Caco-2 (cell line): ENCODE measurements at regions of chr7 and their contacts with region 1.

Region 1: GRCh38 chr7:35519971-35520809 is 174.7 kb downstream of the HERPUD2 start:
- DNase-seq: peak; percentile 66 to 77
- H3K4me3 ChIP-seq: no peak overlapping the region
- H3K4me3 Mint-ChIP-seq: no peak overlapping the region
- H3K27ac Mint-ChIP-seq: no peak overlapping the region
- H3K4me1 ChIP-seq: no peaks in the 10 kb centered on the region
- H3K4me1 Mint-ChIP-seq: no peaks in the 10 kb centered on the region
- H3K27me3 ChIP-seq: no peaks in the 10 kb centered on the region
- H3K27me3 Mint-ChIP-seq: peaks cover 22% of the 10 kb centered on the region
- CTCF ChIP-seq: peak; percentile 88 to 91

Region 2: GRCh38 chr7:35185907-35186731 is 334.1 kb before region 1 on chr7:
- CTCF ChIA-PET with region 1: interaction called, 4 read pairs
- POLR2A ChIA-PET with region 1: no interaction called
- intact Hi-C with region 1: loop called (anchors 1 kb)
- DNase-seq: no peak
- H3K4me3 ChIP-seq: no peak overlapping the region
- H3K4me3 Mint-ChIP-seq: no peak overlapping the region
- H3K27ac Mint-ChIP-seq: no peak overlapping the region
- H3K4me1 ChIP-seq: no peaks in the 10 kb centered on the region
- H3K4me1 Mint-ChIP-seq: no peaks in the 10 kb centered on the region
- H3K27me3 ChIP-seq: no peaks in the 10 kb centered on the region
- H3K27me3 Mint-ChIP-seq: peaks cover 10% of the 10 kb centered on the region
- CTCF ChIP-seq: no peak

Region 3: DNA sequence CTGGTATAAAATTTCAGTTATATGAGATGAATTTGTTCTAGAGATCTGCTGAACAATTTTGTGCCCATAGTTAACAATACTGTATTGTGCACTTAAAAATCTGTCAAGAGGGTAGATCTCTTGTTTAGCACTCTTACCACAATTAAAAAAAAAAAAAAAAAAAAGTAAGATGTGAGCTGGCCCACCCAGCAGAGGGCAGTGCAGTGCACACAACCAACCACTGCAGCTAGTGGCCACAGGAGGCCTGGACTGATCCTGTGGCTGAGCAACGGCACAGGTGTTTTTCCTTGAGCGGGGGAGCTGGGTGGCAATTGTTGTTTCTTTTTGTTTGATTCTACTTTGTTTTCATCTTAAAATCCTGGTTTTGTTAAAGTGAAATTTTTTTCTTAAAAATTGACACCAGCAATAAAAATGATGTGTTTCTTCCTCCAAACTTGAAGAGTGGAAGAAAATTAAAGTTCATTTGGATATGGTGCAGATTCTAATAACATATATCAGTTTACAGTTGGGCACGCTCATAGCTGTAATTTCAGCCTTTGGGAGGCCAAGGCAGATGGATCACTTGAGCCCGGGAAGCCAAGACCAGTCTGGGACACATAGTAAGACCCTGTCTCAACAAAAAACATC is 95.2 kb before region 1 on chr7:
- CTCF ChIA-PET with region 1: interaction called, 15 read pairs
- POLR2A ChIA-PET with region 1: no interaction called
- intact Hi-C with region 1: loop called (anchors 1 kb)
- DNase-seq: peak; percentile 53 to 71
- H3K4me3 ChIP-seq: no peak overlapping the region
- H3K4me3 Mint-ChIP-seq: no peak overlapping the region
- H3K27ac Mint-ChIP-seq: no peak overlapping the region
- H3K4me1 ChIP-seq: no peaks in the 10 kb centered on the region
- H3K4me1 Mint-ChIP-seq: no peaks in the 10 kb centered on the region
- H3K27me3 ChIP-seq: no peaks in the 10 kb centered on the region
- H3K27me3 Mint-ChIP-seq: peaks cover 12% of the 10 kb centered on the region
- CTCF ChIP-seq: peak; percentile 79 to 87

Region 4: DNA sequence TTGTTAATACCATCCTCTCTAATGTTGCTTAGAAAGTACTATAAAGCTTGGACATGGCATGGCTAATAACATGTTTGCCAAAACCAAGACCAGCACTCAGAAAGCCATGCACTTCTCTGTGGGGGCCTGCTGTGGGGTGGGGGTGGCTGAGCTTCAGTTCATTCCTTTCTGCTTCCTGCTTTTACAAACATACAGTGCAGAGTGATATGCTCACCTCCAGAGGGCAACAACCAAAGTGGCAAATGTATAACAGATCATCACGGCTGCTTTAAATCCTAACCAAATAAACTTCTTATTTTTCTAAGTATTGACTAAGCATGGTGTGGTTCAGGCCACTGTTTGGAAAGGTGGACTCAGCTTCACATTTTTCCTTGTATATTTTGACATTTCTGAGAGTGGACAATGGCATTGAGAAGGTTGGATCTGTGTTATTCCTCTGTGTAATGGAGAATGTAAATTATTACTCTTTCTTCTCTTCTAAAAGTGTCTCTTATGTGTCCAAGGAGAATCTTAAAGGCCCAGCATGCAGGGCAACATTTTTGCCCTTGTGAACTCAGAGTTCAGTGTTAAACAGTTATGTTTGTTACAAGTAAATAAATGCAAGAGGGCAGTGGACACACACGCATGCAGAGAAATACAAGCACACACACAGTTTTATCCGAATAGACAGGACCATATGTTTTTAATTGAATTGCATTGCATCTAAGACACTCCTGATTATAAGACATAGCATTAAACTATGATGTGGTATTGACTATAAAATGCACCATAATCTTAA is 11.4 kb before region 1 on chr7:
- CTCF ChIA-PET with region 1: interaction called, 14 read pairs
- POLR2A ChIA-PET with region 1: no interaction called
- intact Hi-C with region 1: no loop called
- DNase-seq: peak in 1 of 2 experiments; percentile 11
- H3K4me3 ChIP-seq: no peak overlapping the region
- H3K4me3 Mint-ChIP-seq: no peak overlapping the region
- H3K27ac Mint-ChIP-seq: no peak overlapping the region
- H3K4me1 ChIP-seq: no peaks in the 10 kb centered on the region
- H3K4me1 Mint-ChIP-seq: no peaks in the 10 kb centered on the region
- H3K27me3 ChIP-seq: no peaks in the 10 kb centered on the region
- H3K27me3 Mint-ChIP-seq: peaks cover 25% of the 10 kb centered on the region
- CTCF ChIP-seq: peak; percentile 14 to 15